Sigmoid colon (tissue), 7 donors: ENCODE measurements at regions of chr1 and their contacts with region 1.

Region 1: DNA sequence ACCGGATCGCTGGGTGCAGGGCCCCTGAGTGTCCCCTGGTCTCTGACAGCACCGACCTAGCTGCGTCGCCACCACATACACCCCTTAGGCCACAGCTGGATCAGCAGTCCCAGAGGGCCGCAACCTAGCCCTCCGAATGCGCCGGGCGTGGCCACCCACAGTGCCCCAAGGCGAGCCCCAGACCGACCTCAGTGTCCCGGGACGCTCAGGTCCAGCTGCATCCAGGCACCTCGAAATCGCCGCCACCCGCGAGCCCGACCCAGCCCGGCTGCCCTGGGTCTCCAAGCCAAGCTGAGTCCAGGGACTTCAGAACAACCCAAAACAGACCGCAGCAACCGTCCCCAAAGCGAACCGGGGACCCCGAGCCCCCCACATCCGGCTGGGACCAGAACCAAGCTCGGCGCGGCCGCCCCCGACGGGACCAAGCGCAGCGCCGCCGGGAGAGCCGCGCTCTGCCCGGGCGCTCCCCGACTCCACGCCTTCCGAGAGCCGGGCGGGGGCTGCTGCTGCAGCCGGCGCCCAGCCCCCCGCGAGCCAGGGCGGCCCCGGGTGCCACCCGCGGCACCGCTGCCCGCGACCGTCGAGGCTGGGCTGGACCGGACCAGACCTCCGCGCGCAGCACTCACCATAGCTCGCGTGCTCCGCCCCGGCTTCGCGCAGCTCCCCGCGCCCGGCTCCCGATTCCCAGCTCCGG is 54.6 kb upstream of the ECE1 start:
- DNase-seq: peak; percentile 78
- H3K4me3 ChIP-seq: peak overlapping the region; percentile 79 to 91 (median 84)
- H3K27ac ChIP-seq: peak overlapping the region; percentile 86 to 96 (median 96)
- H3K4me1 ChIP-seq: peaks cover 0 to 51% (median 44%) of the 10 kb centered on the region in 4 donors
- H3K27me3 ChIP-seq: no peaks in the 10 kb centered on the region
- CTCF ChIP-seq: no peak
- EP300 ChIP-seq: no peak
- POLR2A ChIP-seq: peak; percentile 46 to 47

Region 2: DNA sequence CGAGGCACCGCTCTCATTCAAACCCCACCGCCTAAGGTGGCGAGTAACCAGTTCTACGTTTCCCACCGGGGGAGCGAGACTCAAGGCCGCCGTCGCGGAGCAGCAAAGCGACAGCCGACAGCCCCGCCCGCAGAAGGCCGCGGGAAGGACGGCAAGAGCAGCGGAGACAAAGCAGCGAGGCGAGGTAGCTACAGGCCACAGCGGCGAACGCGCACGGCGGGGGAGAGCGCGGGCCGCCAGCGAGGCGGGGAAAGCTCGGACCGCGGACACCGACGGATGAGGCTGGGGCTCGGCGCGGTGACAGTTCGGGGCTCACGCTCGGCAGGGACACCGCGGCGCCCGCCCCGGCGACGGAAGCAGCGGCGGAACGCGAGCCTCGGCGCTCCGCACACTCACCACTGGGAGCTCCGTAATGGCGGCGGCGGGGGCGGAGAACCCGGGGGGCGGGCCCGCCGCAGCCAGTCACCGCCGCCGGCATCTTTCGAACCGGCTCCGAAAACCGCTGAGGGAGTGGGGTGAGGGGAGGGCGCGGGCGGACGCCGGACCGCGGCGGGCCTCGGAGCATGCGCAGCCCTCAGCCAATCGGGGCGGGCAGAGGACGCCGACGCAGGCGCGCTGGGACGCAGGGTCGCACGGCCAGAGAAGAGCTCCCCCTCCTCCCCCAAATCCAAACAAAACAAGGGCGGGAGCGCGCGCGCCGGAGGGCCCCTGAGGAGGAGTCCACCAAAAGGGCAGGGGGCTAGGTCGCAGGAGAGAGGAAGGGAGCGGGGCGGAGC is 558.5 kb before region 1 on chr1:
- intact Hi-C with region 1: loop called (anchors 10 kb)
- DNase-seq: peak; percentile 97
- H3K4me3 ChIP-seq: peak overlapping the region; percentile 81 to 98 (median 93)
- H3K27ac ChIP-seq: peak overlapping the region; percentile 96 to 100 (median 99)
- H3K4me1 ChIP-seq: peaks cover 0 to 51% (median 34%) of the 10 kb centered on the region in 4 donors
- H3K27me3 ChIP-seq: no peaks in the 10 kb centered on the region
- CTCF ChIP-seq: no peak
- EP300 ChIP-seq: no peak
- POLR2A ChIP-seq: peak; percentile 62 to 67

Region 3: DNA sequence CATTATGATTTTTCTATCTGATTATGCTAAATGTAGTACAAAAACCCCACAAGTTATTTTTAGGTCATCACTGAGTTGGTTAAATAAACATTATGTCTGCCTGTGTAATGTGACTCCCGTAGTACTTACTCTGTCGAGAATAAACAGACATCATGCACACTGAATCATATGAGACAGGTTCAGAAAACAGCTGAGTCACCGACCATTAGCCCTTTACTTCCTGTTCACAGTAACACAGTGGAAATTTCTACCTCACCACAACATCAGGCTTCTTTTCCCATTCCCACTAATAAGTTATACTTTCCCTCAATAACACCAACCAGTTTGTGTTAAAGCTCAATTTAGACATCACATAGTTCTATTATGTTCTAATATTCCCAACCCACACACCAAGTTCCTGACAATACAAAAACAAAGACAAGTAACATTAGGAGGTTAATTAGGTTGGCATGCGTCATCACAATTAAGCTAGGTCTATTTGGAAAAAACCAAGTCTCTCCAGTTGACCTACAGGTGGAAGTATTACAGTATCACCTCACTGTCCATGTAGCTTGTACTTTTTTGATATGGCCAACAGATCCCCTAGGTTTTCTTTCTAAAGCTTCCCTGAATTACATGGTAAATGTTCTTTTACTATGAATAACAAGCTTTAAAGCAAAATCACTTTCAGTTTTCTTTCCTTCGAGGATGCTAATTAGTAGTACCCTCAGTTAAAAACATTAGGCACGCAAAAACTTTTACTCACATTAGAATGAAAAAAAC is 322.4 kb before region 1 on chr1:
- intact Hi-C with region 1: loop called (anchors 10 kb)
- DNase-seq: peak; percentile 84
- H3K4me3 ChIP-seq: peak overlapping the region in 3 of 4 donors; percentile 6 to 22 (median 16)
- H3K27ac ChIP-seq: peak overlapping the region; percentile 81 to 91 (median 86)
- H3K4me1 ChIP-seq: peaks cover 0 to 47% (median 37%) of the 10 kb centered on the region in 4 donors
- H3K27me3 ChIP-seq: no peaks in the 10 kb centered on the region
- CTCF ChIP-seq: no peak
- EP300 ChIP-seq: peak; percentile 85 to 92 (median 91)
- POLR2A ChIP-seq: no peak

Region 4: DNA sequence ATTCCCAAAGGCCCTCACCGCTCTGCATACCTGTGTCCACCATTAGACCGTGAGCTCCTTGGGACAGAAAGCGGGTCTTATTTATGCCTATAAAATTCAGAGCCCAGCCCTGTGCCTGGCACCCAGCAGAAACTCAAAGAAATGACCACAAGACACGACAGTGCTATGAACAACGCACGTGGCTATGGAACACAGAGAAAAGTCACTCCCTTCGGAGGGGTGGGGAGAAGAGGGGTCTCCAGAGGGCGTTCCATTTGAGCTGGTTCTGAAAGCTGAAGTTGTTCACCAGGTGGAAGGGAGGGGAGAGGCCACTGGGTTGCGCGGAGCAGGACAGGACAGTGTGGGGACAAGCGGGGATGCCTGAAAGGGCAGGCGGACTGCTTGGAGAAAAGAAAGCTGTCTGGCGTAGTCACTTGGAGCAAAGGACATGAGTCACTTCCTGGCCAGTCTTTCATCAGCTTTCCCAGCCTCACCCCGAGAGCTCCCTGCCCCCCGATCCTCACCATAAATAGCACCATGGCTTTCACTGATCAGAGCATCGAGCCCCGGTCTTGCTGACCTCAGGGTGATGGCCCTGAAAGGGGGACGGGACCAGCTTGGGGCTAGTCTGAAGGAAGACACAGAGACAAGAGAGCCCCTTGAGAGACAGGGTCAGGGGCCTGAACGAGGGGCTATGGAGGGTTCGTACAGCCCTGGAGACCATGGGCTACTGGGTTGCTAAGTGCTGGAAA is 83.2 kb before region 1 on chr1:
- intact Hi-C with region 1: loop called (anchors 2 kb)
- DNase-seq: peak; percentile 92
- H3K4me3 ChIP-seq: peak overlapping the region in 1 of 4 donors; percentile 9
- H3K27ac ChIP-seq: peak overlapping the region; percentile 85 to 91 (median 86)
- H3K4me1 ChIP-seq: peaks cover 0 to 41% (median 36%) of the 10 kb centered on the region in 4 donors
- H3K27me3 ChIP-seq: no peaks in the 10 kb centered on the region
- CTCF ChIP-seq: no peak
- EP300 ChIP-seq: peak in 1 of 4 donors; percentile 79
- POLR2A ChIP-seq: no peak

Region 5: GRCh38 chr1:21308847-21309652 is 35.8 kb before region 1 on chr1:
- intact Hi-C with region 1: loop called (anchors 2 kb)
- DNase-seq: peak; percentile 97
- H3K4me3 ChIP-seq: peak overlapping the region in 1 of 4 donors; percentile 5
- H3K27ac ChIP-seq: peak overlapping the region; percentile 71 to 96 (median 91)
- H3K4me1 ChIP-seq: peaks cover 0 to 100% (median 97%) of the 10 kb centered on the region in 4 donors
- H3K27me3 ChIP-seq: no peaks in the 10 kb centered on the region
- CTCF ChIP-seq: no peak
- EP300 ChIP-seq: peak; percentile 65 to 90 (median 87)
- POLR2A ChIP-seq: no peak